Panc1 (cell line): ENCODE measurements at regions of chr2 and their contacts with region 1.

Region 1: GRCh38 chr2:64516628-64517510 is 7.3 kb upstream of the AFTPH start:
- DNase-seq: no peak
- ATAC-seq: no peak
- H3K4me3 ChIP-seq: no peak overlapping the region
- H3K27ac ChIP-seq: no peak overlapping the region
- H3K4me1 ChIP-seq: no peaks in the 10 kb centered on the region
- H3K27me3 ChIP-seq: peaks cover 12% of the 10 kb centered on the region
- CTCF ChIP-seq: no peak

Region 2: GRCh38 chr2:64317707-64318475 is 199.0 kb before region 1 on chr2:
- CTCF ChIA-PET with region 1: no interaction called
- POLR2A ChIA-PET with region 1: interaction called, 10 read pairs
- in situ Hi-C with region 1: no loop called
- intact Hi-C with region 1: no loop called
- DNase-seq: no peak
- ATAC-seq: no peak
- H3K4me3 ChIP-seq: no peak overlapping the region
- H3K27ac ChIP-seq: no peak overlapping the region
- H3K4me1 ChIP-seq: no peaks in the 10 kb centered on the region
- H3K27me3 ChIP-seq: peaks cover 20% of the 10 kb centered on the region
- CTCF ChIP-seq: no peak

Region 3: DNA sequence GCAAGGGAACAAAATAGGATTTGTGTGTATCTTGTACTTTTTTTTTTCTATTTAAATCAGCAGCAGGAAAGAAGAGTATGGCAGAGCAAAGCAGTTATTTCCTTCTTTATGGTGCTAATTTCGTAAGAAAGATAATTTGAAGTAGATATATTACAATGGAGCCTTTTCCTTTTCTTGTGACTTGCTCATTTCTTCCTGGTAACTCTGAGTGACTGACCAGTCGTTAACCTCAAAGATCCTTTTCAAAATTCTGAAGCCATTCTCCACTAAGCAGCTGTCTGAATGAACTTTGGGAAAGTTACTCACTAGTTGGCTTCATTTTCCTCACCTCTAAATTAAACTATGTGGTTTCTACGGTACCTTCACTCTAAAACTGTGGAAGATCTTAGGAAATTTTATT is 31.9 kb after region 1 on chr2:
- CTCF ChIA-PET with region 1: no interaction called
- POLR2A ChIA-PET with region 1: no interaction called
- in situ Hi-C with region 1: no loop called
- intact Hi-C with region 1: no loop called
- DNase-seq: no peak
- ATAC-seq: no peak
- H3K4me3 ChIP-seq: no peak overlapping the region
- H3K27ac ChIP-seq: no peak overlapping the region
- H3K4me1 ChIP-seq: no peaks in the 10 kb centered on the region
- H3K27me3 ChIP-seq: no peaks in the 10 kb centered on the region
- CTCF ChIP-seq: no peak